Activated CD8-positive, alpha-beta T cell treated with anti-CD3 and anti-CD28 coated beads, Interleukin-2, amount 10 ng/mL, durations not matched to agents 7 days and 5 days (primary cell): ENCODE measurements at regions of chr19 and their contacts with region 1.

Region 1: DNA sequence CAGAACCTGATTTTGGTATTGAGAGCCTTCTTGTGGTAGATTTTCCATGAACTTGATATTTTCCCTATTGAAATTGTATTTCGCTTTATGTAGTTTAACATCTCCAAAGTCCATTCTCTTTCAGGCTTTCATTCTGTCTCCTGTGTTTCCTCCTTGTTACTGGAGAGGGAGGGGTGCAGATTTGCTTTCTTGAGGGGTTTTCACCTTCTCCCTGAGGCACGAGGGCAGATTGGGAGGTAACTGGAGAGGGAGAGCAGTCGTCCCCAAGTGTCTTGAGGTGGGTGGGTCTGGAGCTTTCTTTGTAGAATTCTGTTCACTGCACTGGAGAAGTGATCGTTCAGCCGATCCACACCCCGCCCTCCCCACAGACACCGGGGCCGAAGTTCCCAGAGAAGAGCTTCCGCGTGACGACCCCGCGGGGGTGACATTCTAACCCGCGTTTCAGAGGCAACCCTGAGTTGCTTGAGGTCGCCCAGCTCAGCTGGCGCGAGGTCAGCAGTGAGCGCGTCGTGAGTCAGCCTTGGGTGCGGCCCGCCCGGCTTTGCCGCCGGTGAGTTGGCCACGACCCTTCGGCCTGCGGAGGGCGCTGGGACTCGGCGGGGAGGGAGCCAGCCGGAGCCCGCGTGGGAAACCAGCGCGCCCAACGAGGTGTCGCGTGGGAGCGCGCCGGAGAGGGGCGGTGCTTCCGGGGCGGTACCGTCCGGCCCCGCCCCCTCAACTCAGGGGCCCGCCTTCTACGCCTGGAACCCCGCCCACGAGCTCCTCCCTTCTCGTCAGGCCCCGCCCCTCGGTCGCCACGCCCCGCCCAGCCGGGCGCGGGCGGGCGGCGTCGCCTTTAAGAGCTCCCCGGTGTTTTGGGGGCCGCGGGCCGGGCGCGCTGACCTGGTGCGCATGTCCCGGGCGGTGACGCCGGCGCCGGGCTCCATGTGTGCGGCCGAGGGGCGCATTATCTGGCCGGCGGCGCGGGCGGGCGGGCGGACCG is at the start of gene GATAD2A:
- DNase-seq: peak; percentile 92
- ATAC-seq: peak; percentile 80
- H3K4me3 Mint-ChIP-seq: peak within 1 kb of the TSS; percentile 98
- H3K27ac Mint-ChIP-seq: peak within 1 kb of the TSS; percentile 93
- H3K4me1 Mint-ChIP-seq: peaks cover 61% of the 10 kb centered on the region
- H3K27me3 Mint-ChIP-seq: no peaks in the 10 kb centered on the region
- total RNA-seq, gene GATAD2A: 180 TPM

Region 2: DNA sequence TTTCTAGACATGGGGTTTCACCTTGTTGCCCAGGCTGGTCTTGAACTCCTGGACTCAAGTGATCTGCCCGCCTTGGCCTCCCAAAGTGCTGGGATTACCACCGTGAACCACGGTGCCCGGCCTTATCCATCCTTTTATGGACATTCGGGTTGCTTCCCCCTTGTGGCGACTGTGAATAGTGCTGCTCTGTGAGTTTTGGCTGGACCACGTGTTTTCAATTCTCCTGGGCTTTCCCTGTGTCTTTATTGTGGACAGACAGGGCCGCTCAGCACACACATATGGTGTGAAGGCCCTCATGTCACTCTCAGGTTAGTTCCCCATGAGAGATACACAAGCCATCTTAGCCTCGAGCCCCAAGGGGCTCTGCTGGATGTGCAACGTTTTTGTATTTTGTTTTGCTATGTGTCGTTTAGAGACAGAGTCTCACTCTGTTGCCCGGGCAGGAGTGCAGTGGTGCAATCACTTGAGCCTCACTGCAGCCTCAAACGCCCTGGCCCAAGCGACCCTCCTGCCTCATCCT is 44.0 kb before region 1 on chr19:
- CTCF ChIA-PET with region 1: interaction called, 9 read pairs
- POLR2A ChIA-PET with region 1: interaction called, 19 read pairs
- DNase-seq: peak; percentile 80
- ATAC-seq: peak; percentile 71
- H3K4me3 Mint-ChIP-seq: no peak overlapping the region
- H3K27ac Mint-ChIP-seq: peak overlapping the region; percentile 49
- H3K4me1 Mint-ChIP-seq: peaks cover 37% of the 10 kb centered on the region
- H3K27me3 Mint-ChIP-seq: no peaks in the 10 kb centered on the region

Region 3: GRCh38 chr19:19385108-19385899 is 19.9 kb before region 1 on chr19:
- CTCF ChIA-PET with region 1: interaction called, 4 read pairs
- POLR2A ChIA-PET with region 1: interaction called, 11 read pairs
- DNase-seq: peak; percentile 100
- ATAC-seq: peak; percentile 96
- H3K4me3 Mint-ChIP-seq: peak overlapping the region; percentile 80
- H3K27ac Mint-ChIP-seq: peak overlapping the region; percentile 92
- H3K4me1 Mint-ChIP-seq: peaks cover 45% of the 10 kb centered on the region
- H3K27me3 Mint-ChIP-seq: no peaks in the 10 kb centered on the region

Region 4: GRCh38 chr19:19418555-19419260 is 13.5 kb after region 1 on chr19:
- CTCF ChIA-PET with region 1: interaction called, 25 read pairs
- POLR2A ChIA-PET with region 1: interaction called, 10 read pairs
- DNase-seq: no peak
- ATAC-seq: peak; percentile 42
- H3K4me3 Mint-ChIP-seq: no peak overlapping the region
- H3K27ac Mint-ChIP-seq: peak overlapping the region; percentile 70
- H3K4me1 Mint-ChIP-seq: peaks cover 56% of the 10 kb centered on the region
- H3K27me3 Mint-ChIP-seq: no peaks in the 10 kb centered on the region

Region 5: DNA sequence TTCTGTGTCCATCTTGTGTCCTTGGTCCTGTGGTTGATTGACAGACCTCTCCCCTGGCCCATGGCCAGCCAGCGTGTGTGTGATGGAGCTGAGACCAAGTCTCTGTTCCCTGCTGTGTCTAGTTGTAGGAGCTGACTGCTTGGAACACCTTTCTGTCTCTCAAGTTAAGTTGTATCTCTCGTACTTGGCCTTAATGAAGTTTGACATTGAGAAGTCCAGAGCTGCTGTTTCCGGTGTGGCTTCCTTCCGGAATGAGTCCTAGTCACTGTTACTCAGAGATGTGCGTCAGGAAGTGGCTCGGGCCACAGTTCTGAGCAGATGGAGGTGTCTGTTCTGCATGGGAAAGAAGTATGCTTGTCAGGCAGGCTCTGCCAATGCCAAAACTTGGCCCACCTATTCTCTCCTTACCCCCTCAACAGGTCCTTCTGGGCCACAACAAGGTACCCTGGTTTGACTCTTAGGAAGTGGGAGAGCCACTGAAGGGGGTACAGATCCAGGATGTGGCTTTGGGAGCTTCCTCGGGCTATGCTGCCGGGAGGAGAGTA is 54.6 kb after region 1 on chr19:
- CTCF ChIA-PET with region 1: interaction called, 16 read pairs
- POLR2A ChIA-PET with region 1: interaction called, 5 read pairs
- DNase-seq: peak; percentile 82
- ATAC-seq: peak; percentile 61
- H3K4me3 Mint-ChIP-seq: peak overlapping the region; percentile 64
- H3K27ac Mint-ChIP-seq: peak overlapping the region; percentile 99
- H3K4me1 Mint-ChIP-seq: peaks cover 87% of the 10 kb centered on the region
- H3K27me3 Mint-ChIP-seq: no peaks in the 10 kb centered on the region

Region 6: GRCh38 chr19:19515764-19516519 is 110.8 kb after region 1 on chr19 and contains the start of gene NDUFA13:
- CTCF ChIA-PET with region 1: no interaction called
- POLR2A ChIA-PET with region 1: no interaction called
- DNase-seq: peak; percentile 95
- ATAC-seq: peak; percentile 91
- H3K4me3 Mint-ChIP-seq: peak within 1 kb of the TSS; percentile 94
- H3K27ac Mint-ChIP-seq: peak within 1 kb of the TSS; percentile 94
- H3K4me1 Mint-ChIP-seq: peaks cover 37% of the 10 kb centered on the region
- H3K27me3 Mint-ChIP-seq: no peaks in the 10 kb centered on the region
- total RNA-seq, gene NDUFA13: 388 to 413 TPM